ENCODE measurements at regions of chr13 and their contacts with region 1.

Region 1: DNA sequence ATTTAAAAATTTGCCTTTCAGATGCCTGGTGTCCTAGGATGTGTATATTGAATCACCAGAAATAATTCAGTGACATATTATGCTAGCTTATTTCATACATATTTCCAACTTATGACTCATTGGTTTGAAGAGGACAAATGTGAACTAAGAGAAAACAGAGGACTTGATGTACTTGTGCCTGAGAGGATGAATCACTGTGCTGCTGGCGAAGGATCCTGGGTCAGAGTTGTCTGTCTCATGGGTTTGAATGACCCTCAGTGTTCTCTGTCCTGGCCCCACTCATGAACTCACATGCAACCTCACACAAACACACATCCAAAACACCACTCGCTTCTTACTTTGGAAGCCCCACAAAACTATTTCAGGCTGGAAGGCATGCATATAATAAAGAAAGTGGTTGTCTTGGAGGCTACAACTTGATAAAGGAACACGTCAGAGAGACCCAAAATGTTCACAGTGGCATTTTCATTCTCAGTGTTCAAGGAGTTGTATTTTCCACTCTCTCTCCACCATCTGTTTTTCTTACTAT is 129.0 kb upstream of the SPRY2 start:
- DNase-seq: no peak
- H3K4me3 ChIP-seq: no peak overlapping the region
- H3K27ac ChIP-seq: peak overlapping the region; percentile 10 to 26
- H3K4me1 ChIP-seq: no peaks in the 10 kb centered on the region
- H3K27me3 ChIP-seq: no peaks in the 10 kb centered on the region
- CTCF ChIP-seq: no peak
- POLR2A ChIP-seq: no peak

Region 2: GRCh38 chr13:80630685-80631121 is 160.8 kb after region 1 on chr13:
- intact Hi-C with region 1: loop called (anchors 10 kb)
- DNase-seq: no peak
- H3K4me3 ChIP-seq: no peak overlapping the region
- H3K27ac ChIP-seq: no peak overlapping the region
- H3K4me1 ChIP-seq: no peaks in the 10 kb centered on the region
- H3K27me3 ChIP-seq: no peaks in the 10 kb centered on the region
- CTCF ChIP-seq: no peak
- POLR2A ChIP-seq: no peak

Region 3: GRCh38 chr13:80740071-80740470 is 270.2 kb after region 1 on chr13:
- intact Hi-C with region 1: no loop called
- DNase-seq: no peak
- H3K4me3 ChIP-seq: no peak overlapping the region
- H3K27ac ChIP-seq: no peak overlapping the region
- H3K4me1 ChIP-seq: no peaks in the 10 kb centered on the region
- H3K27me3 ChIP-seq: no peaks in the 10 kb centered on the region
- CTCF ChIP-seq: no peak
- POLR2A ChIP-seq: no peak

Measured in prostate gland (tissue), 2 donors.